ENCODE measurements at regions of chr4 and their contacts with region 1.

Region 1: DNA sequence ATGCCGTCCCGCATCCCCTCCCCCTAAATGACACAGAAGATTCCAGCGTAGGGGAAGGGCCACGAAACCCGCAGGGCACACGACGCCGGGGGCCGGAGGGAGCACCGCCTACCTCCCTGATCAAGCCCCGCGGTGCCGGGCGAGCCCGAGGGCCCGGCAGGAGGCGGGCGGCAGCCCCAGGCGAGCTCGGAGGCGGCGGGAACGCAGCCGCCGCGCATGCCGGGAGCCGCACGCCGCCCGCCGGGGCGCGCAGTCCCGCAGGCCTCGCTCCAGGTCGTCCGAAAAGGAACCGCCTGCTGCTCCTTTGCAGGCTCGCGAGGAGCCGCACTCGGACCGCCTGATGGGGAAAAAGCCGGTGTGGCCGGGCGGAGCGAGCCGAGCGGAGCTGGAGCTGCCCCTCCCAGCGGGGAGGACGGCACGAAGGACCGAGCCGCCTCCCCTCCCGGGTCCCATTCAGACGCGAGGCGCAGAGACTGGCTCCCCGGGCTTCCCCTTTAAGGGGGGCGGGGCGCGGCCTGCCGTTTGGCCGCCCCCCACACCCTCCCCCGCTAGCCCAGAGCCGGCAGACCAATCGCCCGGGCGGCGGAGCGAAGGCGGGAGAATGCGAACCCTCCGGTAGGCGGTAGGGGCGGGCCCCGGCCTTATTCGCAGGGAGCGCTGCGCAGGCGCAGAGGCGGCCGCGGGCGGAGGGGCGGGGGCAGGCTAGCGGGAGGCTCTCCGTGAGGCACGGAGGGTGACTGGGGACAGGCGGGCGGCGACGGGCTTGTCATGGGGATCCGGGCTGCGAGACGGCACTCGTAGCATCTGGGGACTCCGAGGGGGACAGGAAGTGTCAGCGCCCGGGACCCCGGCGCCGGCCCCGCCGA is 561 bp upstream of the ING2 start:
- DNase-seq: peak; percentile 99 to 100 (median 99)
- ATAC-seq: peak; percentile 78
- H3K4me3 ChIP-seq: peak overlapping the region; percentile 95 to 98
- H3K4me3 Mint-ChIP-seq: peak overlapping the region; percentile 98
- H3K27ac ChIP-seq: peak overlapping the region; percentile 84 to 98
- H3K27ac Mint-ChIP-seq: peak overlapping the region; percentile 99
- H3K4me1 ChIP-seq: peaks cover 14% of the 10 kb centered on the region
- H3K4me1 Mint-ChIP-seq: peaks cover 34% of the 10 kb centered on the region
- H3K27me3 ChIP-seq: no peaks in the 10 kb centered on the region
- H3K27me3 Mint-ChIP-seq: no peaks in the 10 kb centered on the region
- CTCF ChIP-seq: no peak

Region 2: DNA sequence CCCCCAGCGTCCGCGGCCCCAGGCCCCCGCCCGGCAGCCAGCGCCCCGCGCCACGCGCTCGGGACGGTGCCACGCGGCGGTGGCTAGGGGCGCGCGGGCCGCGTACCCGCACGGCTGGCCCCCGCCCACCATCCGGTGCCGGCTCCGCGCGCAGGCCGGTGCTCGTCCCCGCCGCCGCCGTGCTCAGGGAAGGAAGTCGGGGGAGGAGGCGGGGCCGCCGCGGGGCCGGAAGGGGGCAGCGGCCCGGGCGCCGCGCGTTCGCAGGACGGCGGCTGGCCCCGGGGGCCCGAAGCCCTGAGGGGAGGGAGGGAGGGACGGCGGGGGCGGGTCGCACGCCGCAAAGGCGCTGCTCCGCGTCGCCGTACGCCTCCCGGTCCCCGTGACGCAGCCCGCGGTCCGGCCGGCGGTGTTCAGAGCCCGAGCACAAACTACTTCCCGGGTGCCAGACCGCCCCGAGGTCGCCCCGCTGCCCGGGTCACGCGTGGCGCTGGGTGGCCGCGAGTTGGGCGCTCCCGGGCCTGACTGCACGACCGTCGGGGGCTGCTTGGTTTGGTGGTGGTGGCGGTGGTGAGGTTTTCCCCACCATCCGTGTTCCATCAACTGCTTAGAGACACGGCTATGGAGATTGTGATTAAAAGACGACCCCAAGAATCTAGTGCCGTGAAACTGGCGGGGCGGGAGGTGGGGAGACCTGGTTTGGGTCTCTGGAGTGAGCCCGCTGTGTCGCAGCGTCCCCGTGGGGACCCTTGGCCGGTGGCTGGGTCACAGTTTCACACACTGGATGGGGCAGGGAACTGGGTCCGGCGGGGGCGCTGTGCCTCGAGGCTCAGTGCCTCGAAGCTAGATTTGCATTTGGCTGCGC is 586.9 kb before region 1 on chr4 and contains the start of gene DCTD:
- CTCF ChIA-PET with region 1: no interaction called
- POLR2A ChIA-PET with region 1: interaction called, 7 read pairs
- intact Hi-C with region 1: loop called (anchors 2 to 5 kb)
- DNase-seq: peak; percentile 47 to 89 (median 80)
- ATAC-seq: peak; percentile 72
- H3K4me3 ChIP-seq: peak within 1 kb of the TSS; percentile 82 to 85
- H3K4me3 Mint-ChIP-seq: peak within 1 kb of the TSS; percentile 89
- H3K27ac ChIP-seq: peak within 1 kb of the TSS; percentile 96 to 97
- H3K27ac Mint-ChIP-seq: peak within 1 kb of the TSS; percentile 92
- H3K4me1 ChIP-seq: peaks cover 32% of the 10 kb centered on the region
- H3K4me1 Mint-ChIP-seq: peaks cover 60% of the 10 kb centered on the region
- H3K27me3 ChIP-seq: no peaks in the 10 kb centered on the region
- H3K27me3 Mint-ChIP-seq: peaks cover under 1% of the 10 kb centered on the region
- CTCF ChIP-seq: peak; percentile 20
- total RNA-seq, gene DCTD: 49.6 to 57.0 TPM

Region 3: DNA sequence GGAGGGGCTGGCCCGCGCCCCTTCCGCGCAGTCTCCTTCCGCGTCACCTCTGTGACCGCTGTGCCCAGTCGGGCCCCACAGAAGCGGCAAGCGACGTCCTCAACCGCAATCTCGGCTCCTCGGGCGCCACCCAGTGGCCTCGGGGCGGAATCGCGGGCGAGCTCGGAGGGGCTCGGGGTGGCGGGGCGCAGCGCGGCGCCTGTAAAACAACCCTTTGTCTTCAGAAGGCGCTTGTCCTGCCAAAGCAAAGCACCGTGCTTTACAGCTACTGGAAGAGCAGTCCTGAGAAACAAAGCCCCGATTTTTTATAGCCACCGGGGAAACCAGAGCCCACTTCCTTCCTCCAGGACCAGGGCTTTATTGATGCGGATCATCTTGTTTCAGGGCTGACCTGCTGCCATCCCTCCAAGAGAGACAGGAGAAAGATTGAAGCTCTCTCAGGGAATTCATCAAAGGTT is 97.1 kb before region 1 on chr4:
- CTCF ChIA-PET with region 1: interaction called, 3 read pairs
- POLR2A ChIA-PET with region 1: no interaction called
- intact Hi-C with region 1: loop called in 1 of 2 experiments (anchors 1 kb)
- DNase-seq: peak; percentile 87 to 96 (median 90)
- ATAC-seq: peak; percentile 97
- H3K4me3 ChIP-seq: peak overlapping the region; percentile 54 to 65
- H3K4me3 Mint-ChIP-seq: peak overlapping the region; percentile 85
- H3K27ac ChIP-seq: peak overlapping the region; percentile 52 to 72
- H3K27ac Mint-ChIP-seq: peak overlapping the region; percentile 89
- H3K4me1 ChIP-seq: peaks cover 6% of the 10 kb centered on the region
- H3K4me1 Mint-ChIP-seq: peaks cover 13% of the 10 kb centered on the region
- H3K27me3 ChIP-seq: no peaks in the 10 kb centered on the region
- H3K27me3 Mint-ChIP-seq: no peaks in the 10 kb centered on the region
- CTCF ChIP-seq: peak; percentile 74

Region 4: GRCh38 chr4:183471946-183472708 is 32.2 kb before region 1 on chr4:
- CTCF ChIA-PET with region 1: interaction called, 8 read pairs
- POLR2A ChIA-PET with region 1: interaction called, 3 read pairs
- intact Hi-C with region 1: loop called (anchors 1 kb)
- DNase-seq: peak; percentile 58 to 89 (median 80)
- ATAC-seq: peak; percentile 82
- H3K4me3 ChIP-seq: no peak overlapping the region
- H3K4me3 Mint-ChIP-seq: no peak overlapping the region
- H3K27ac ChIP-seq: no peak overlapping the region
- H3K27ac Mint-ChIP-seq: no peak overlapping the region
- H3K4me1 ChIP-seq: no peaks in the 10 kb centered on the region
- H3K4me1 Mint-ChIP-seq: peaks cover 5% of the 10 kb centered on the region
- H3K27me3 ChIP-seq: no peaks in the 10 kb centered on the region
- H3K27me3 Mint-ChIP-seq: no peaks in the 10 kb centered on the region
- CTCF ChIP-seq: peak; percentile 81

Region 5: GRCh38 chr4:184538023-184538599 is 1033.8 kb after region 1 on chr4:
- CTCF ChIA-PET with region 1: no interaction called
- POLR2A ChIA-PET with region 1: no interaction called
- intact Hi-C with region 1: loop called (anchors 2 to 5 kb)
- DNase-seq: peak; percentile 38 to 88 (median 65)
- ATAC-seq: peak; percentile 45
- H3K4me3 ChIP-seq: peak overlapping the region; percentile 57 to 63
- H3K4me3 Mint-ChIP-seq: peak overlapping the region; percentile 91
- H3K27ac ChIP-seq: peak overlapping the region; percentile 84 to 90
- H3K27ac Mint-ChIP-seq: peak overlapping the region; percentile 100
- H3K4me1 ChIP-seq: peaks cover 33% of the 10 kb centered on the region
- H3K4me1 Mint-ChIP-seq: peaks cover 46% of the 10 kb centered on the region
- H3K27me3 ChIP-seq: no peaks in the 10 kb centered on the region
- H3K27me3 Mint-ChIP-seq: no peaks in the 10 kb centered on the region
- CTCF ChIP-seq: peak; percentile 36

Region 6: DNA sequence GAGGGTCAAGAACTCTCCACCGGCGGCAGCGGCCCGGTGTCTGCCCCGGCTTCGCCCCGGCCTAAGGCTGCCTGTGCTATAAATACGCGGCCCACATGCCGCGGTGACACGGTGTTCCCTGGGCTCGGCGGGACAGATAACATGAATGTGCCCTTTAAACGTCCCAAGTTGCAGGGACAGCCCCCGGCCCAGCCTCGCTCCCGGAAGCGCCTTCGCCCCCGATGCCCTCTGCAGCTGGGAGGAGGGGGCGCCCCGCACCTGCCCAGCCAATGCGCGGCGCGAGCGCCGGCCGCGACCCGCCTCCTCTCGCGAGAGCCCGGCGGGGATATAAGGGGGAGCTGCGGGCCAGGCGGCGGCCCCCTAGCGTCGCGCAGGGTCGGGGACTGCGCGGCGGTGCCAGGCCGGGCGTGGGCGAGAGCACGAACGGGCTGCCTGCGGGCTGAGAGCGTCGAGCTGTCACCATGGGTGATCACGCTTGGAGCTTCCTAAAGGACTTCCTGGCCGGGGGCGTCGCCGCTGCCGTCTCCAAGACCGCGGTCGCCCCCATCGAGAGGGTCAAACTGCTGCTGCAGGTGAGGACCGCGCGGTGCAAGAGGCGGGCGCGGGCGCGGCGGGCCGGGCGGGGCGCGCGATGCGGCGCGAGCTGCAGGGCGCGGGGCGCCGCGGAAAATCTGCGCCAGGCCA is 1638.8 kb after region 1 on chr4 and contains the start of gene SLC25A4:
- CTCF ChIA-PET with region 1: no interaction called
- POLR2A ChIA-PET with region 1: no interaction called
- intact Hi-C with region 1: loop called in 1 of 2 experiments (anchors 10 kb)
- DNase-seq: peak; percentile 73 to 94 (median 86)
- ATAC-seq: peak; percentile 93
- H3K4me3 ChIP-seq: peak within 1 kb of the TSS; percentile 65 to 84
- H3K4me3 Mint-ChIP-seq: peak within 1 kb of the TSS; percentile 91
- H3K27ac ChIP-seq: peak within 1 kb of the TSS; percentile 51 to 62
- H3K27ac Mint-ChIP-seq: peak within 1 kb of the TSS; percentile 91
- H3K4me1 ChIP-seq: peaks cover 15% of the 10 kb centered on the region
- H3K4me1 Mint-ChIP-seq: peaks cover 20% of the 10 kb centered on the region
- H3K27me3 ChIP-seq: no peaks in the 10 kb centered on the region
- H3K27me3 Mint-ChIP-seq: peaks cover 8% of the 10 kb centered on the region
- CTCF ChIP-seq: peak; percentile 59
- total RNA-seq, gene SLC25A4: 10.0 to 11.0 TPM

Region 7: DNA sequence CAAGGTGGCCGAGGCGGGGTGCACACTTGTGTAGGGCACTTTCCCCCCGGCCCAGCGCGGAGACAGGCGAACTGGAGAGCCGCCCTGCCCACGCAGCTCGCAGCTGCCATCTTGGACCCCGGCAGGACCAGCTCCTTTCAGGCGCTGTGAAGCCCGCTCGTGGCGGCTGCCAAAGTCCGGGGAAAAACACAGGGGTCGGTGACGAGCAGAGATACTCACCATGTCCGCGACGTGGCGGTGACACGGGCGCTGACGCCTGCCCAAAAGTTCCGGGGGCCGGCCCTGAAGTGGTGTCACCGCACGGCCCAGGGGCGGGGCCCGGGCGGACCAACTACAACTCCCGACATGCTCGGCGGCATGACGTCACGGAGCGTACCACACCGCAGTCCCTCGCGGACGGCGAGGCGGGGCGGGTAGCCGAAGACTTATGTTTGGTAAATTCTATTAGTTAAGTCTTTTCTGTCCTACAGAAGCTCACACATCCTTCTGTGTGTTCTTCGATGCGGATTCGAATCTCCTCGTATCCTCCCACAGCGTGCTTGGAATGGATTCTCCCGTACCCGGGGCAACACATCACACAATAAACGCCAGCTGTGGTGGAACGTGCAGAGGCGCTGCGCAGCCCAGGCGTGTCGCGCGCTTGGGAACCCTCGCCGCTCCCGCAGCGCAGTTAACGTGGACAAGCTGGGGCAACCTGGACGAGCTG is 1921.5 kb after region 1 on chr4 and contains the start of gene UFSP2:
- CTCF ChIA-PET with region 1: no interaction called
- POLR2A ChIA-PET with region 1: no interaction called
- intact Hi-C with region 1: loop called in 1 of 2 experiments (anchors 2 kb)
- DNase-seq: peak; percentile 75 to 97 (median 89)
- ATAC-seq: peak; percentile 86
- H3K4me3 ChIP-seq: peak within 1 kb of the TSS; percentile 87 to 90
- H3K4me3 Mint-ChIP-seq: peak within 1 kb of the TSS; percentile 83
- H3K27ac ChIP-seq: peak within 1 kb of the TSS; percentile 97 to 99
- H3K27ac Mint-ChIP-seq: peak within 1 kb of the TSS; percentile 100
- H3K4me1 ChIP-seq: peaks cover 18% of the 10 kb centered on the region
- H3K4me1 Mint-ChIP-seq: peaks cover 36% of the 10 kb centered on the region
- H3K27me3 ChIP-seq: no peaks in the 10 kb centered on the region
- H3K27me3 Mint-ChIP-seq: peaks cover 5% of the 10 kb centered on the region
- CTCF ChIP-seq: no peak
- total RNA-seq, gene UFSP2: 13.4 to 17.4 TPM